ENCODE measurements at regions of chr14 and their contacts with region 1.

Region 1: GRCh38 chr14:89650077-89650978 is 233.3 kb upstream of the FOXN3 start:
- DNase-seq: no peak
- H3K4me3 ChIP-seq: no peak overlapping the region
- H3K27ac ChIP-seq: no peak overlapping the region
- H3K4me1 ChIP-seq: no peaks in the 10 kb centered on the region
- H3K27me3 ChIP-seq: no peaks in the 10 kb centered on the region
- CTCF ChIP-seq: no peak

Region 2: DNA sequence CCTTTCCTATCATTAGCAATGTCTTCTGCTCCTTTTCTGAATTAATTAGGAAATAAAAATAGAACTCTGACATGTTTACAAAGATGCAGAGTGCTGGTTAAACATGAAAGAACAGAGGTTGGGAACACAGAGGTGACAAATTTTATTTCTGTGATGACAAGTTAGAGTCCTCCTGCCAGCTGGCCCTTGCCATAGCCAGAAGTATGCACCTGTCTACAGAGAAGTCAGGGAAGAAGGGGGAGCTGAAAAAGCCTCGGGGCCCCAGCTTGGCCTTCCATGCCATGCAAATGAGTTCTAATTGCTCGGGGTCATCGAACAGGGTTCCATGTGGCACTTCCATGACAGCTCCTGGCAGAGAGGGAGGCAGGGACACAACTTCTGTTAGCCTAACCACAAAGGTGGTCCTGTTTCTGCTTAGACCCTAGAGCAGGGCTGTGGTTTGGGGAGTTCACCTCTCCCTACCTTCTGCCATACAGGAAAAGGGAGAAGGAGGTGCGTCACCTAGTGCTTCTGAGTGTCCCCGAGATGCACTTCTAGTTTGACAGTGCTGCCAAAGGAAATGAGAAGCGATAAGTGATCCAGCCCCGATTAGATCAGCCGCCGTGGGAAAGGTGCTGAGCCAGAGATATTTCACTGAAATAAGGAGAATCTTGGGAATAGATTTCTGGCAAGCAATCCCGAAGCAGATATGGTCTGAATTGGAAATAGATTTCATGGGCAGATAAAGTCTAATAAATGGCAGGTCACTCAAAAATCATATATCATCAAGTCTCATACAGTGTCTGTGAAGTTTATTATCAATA is 77.5 kb before region 1 on chr14:
- CTCF ChIA-PET with region 1: no interaction called
- dilution Hi-C with region 1: loop called (anchors 5 kb)
- in situ Hi-C with region 1: no loop called
- intact Hi-C with region 1: no loop called
- DNase-seq: no peak
- H3K4me3 ChIP-seq: no peak overlapping the region
- H3K27ac ChIP-seq: no peak overlapping the region
- H3K4me1 ChIP-seq: no peaks in the 10 kb centered on the region
- H3K27me3 ChIP-seq: no peaks in the 10 kb centered on the region
- CTCF ChIP-seq: no peak

Region 3: DNA sequence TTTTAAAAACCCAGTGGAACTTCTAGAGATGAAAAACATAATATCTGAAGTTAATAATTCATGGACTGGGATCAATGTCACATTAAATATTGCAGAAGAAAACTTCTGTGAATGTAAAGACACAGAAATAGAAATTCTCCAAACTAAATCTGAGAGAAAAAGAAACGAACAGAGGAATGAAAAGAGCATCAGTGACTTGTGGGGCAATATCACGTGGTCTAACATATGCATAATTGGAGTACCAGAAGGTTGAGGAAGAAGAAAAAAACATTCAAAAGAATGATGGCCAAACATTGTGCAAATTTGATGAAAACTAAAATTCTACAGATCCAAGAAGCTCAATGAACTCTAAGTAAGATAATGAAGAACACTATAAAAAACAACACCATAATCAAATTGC is 173.4 kb after region 1 on chr14:
- CTCF ChIA-PET with region 1: no interaction called
- dilution Hi-C with region 1: no loop called
- in situ Hi-C with region 1: no loop called
- intact Hi-C with region 1: no loop called
- DNase-seq: no peak
- H3K4me3 ChIP-seq: no peak overlapping the region
- H3K27ac ChIP-seq: no peak overlapping the region
- H3K4me1 ChIP-seq: no peaks in the 10 kb centered on the region
- H3K27me3 ChIP-seq: no peaks in the 10 kb centered on the region
- CTCF ChIP-seq: no peak